ENCODE measurements at regions of chr6 and their contacts with region 1.

Region 1: GRCh38 chr6:5030596-5031136 is 26.8 kb upstream of the RPP40 start:
- DNase-seq: peak; percentile 96
- H3K4me3 ChIP-seq: no peak overlapping the region
- H3K27ac ChIP-seq: peak overlapping the region; percentile 73
- H3K4me1 ChIP-seq: peaks cover 49% of the 10 kb centered on the region
- H3K27me3 ChIP-seq: no peaks in the 10 kb centered on the region
- CTCF ChIP-seq: peak; percentile 93

Region 2: DNA sequence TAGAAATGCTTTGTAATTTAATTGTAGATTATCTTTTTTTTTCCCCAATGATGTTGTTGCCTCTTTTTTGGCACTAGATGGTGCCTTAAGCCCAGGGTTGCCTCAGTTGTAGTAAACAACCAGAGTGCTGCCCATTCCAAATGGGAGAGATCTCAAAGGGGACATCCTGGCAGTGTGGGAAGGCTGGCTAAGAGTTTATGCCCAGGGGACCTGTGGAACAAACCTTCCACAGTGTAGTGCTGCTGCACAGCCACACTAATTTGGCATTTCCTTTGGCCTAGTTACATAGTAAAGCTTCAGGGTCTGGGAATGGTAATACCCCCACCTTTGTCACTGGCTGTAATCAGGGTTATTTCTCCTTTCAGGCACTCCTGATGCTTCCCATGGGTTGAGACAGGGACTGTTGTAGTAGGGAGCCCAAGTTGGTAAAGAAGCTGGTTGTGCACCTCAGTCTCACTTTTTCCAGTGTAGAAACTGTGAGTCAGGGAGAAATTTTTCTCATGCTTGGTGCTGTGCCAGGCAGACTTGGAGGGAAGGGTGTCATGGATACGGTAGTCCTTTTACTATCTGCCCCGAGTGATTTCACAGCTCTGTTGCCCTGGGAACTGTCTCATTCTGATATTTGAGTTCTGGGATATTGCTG is 717.5 kb before region 1 on chr6:
- CTCF ChIA-PET with region 1: no interaction called
- POLR2A ChIA-PET with region 1: no interaction called
- intact Hi-C with region 1: loop called (anchors 1 kb)
- DNase-seq: peak; percentile 80
- H3K4me3 ChIP-seq: no peak overlapping the region
- H3K27ac ChIP-seq: peak overlapping the region; percentile 41
- H3K4me1 ChIP-seq: peaks cover 20% of the 10 kb centered on the region
- H3K27me3 ChIP-seq: no peaks in the 10 kb centered on the region
- CTCF ChIP-seq: peak; percentile 70

Region 3: DNA sequence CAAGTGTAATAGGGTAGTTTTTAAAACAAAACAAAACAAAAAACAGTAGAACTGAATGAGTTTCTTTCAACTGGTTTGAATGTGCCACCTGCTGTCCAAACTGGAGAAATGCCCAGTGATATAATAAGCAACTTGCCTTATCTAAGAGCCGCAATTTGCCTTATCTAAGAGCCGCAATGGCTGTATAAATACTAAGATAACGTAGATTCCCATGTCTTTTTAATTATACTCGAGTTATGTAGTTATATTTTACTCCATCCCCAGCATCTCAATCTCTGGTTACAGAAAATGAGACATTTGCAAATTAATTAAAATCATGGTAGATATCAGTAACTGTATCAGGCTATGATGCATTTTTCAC is 94.0 kb before region 1 on chr6:
- CTCF ChIA-PET with region 1: no interaction called
- POLR2A ChIA-PET with region 1: no interaction called
- intact Hi-C with region 1: loop called (anchors 10 kb)
- DNase-seq: peak; percentile 77
- H3K4me3 ChIP-seq: no peak overlapping the region
- H3K27ac ChIP-seq: peak overlapping the region; percentile 38
- H3K4me1 ChIP-seq: peaks cover 87% of the 10 kb centered on the region
- H3K27me3 ChIP-seq: no peaks in the 10 kb centered on the region
- CTCF ChIP-seq: peak; percentile 76

Region 4: GRCh38 chr6:5003604-5004372 is 26.9 kb before region 1 on chr6 and contains the start of gene RPP40:
- CTCF ChIA-PET with region 1: interaction called, 13 read pairs
- POLR2A ChIA-PET with region 1: no interaction called
- intact Hi-C with region 1: no loop called
- DNase-seq: peak; percentile 99
- H3K4me3 ChIP-seq: peak within 1 kb of the TSS; percentile 86
- H3K27ac ChIP-seq: peak within 1 kb of the TSS; percentile 86
- H3K4me1 ChIP-seq: no peaks in the 10 kb centered on the region
- H3K27me3 ChIP-seq: no peaks in the 10 kb centered on the region
- CTCF ChIP-seq: peak; percentile 94
- total RNA-seq, gene RPP40: 28.0 and 30.7 TPM in 2 replicates

Measured in A673 (cell line).